Activated naive CD4-positive, alpha-beta T cell treated with anti-CD3 and anti-CD28 coated beads for 36 hours (primary cell): ENCODE measurements at regions of chr17 and their contacts with region 1.

Region 1: GRCh38 chr17:58082870-58083490 is at the start of gene DYNLL2:
- DNase-seq: peak; percentile 94
- H3K4me3 Mint-ChIP-seq: peak within 1 kb of the TSS; percentile 77
- H3K27ac Mint-ChIP-seq: peak within 1 kb of the TSS; percentile 80
- H3K4me1 Mint-ChIP-seq: peaks cover 36% of the 10 kb centered on the region
- H3K27me3 Mint-ChIP-seq: no peaks in the 10 kb centered on the region
- total RNA-seq, gene DYNLL2: 19.1 to 19.4 TPM

Region 2: GRCh38 chr17:57084802-57085447 is 998.1 kb before region 1 on chr17 and contains the start of gene AKAP1:
- CTCF ChIA-PET with region 1: no interaction called
- intact Hi-C with region 1: loop called (anchors 2 kb)
- DNase-seq: peak; percentile 95
- H3K4me3 Mint-ChIP-seq: peak within 1 kb of the TSS; percentile 83
- H3K27ac Mint-ChIP-seq: peak within 1 kb of the TSS; percentile 81
- H3K4me1 Mint-ChIP-seq: peaks cover 43% of the 10 kb centered on the region
- H3K27me3 Mint-ChIP-seq: no peaks in the 10 kb centered on the region
- total RNA-seq, gene AKAP1: 17.6 to 23.1 TPM

Region 3: DNA sequence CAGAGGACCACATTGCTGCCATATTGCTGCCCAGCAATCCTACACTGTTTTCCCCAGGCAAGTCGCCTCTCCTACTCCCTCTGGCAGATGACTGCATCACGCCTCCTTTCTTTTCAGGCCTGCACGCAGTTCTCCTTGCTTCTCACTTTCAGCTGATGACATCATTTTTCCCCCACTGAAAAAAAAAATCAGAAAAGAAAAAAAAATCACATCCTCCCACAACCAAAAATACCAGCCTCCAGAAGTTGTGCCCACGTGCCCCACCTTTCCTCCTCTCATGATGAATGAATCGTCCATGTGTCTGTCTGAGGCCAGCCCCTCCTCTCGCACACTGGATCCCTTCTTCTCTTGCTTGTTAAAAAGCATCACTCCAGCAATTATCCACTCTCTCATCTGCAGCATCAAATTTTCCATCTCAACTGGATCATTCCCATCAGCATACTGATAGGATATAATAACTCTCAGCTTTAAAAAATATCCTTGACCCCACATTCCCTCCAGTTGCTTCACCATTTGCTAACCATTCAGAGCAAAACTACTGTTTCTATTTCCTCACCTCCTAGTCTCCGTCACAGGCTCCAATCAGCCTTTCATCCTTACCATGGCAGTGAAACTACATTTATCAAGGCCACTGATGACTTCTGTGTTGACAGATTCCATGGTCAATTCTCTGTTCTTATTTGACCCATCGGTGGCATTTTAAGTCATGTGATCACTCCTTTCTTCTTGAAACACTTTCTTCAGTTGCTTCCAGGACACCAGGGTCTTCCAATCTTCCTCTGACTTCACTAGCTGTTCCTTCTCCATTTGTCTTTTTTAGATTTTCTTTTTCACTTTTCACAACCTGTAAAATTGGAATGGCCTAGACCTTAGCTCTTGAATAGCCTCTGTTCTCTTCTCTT is 29.8 kb before region 1 on chr17:
- CTCF ChIA-PET with region 1: no interaction called
- intact Hi-C with region 1: loop called (anchors 1 kb)
- DNase-seq: peak; percentile 49
- H3K4me3 Mint-ChIP-seq: no peak overlapping the region
- H3K27ac Mint-ChIP-seq: peak overlapping the region; percentile 20
- H3K4me1 Mint-ChIP-seq: peaks cover 17% of the 10 kb centered on the region
- H3K27me3 Mint-ChIP-seq: no peaks in the 10 kb centered on the region

Region 4: DNA sequence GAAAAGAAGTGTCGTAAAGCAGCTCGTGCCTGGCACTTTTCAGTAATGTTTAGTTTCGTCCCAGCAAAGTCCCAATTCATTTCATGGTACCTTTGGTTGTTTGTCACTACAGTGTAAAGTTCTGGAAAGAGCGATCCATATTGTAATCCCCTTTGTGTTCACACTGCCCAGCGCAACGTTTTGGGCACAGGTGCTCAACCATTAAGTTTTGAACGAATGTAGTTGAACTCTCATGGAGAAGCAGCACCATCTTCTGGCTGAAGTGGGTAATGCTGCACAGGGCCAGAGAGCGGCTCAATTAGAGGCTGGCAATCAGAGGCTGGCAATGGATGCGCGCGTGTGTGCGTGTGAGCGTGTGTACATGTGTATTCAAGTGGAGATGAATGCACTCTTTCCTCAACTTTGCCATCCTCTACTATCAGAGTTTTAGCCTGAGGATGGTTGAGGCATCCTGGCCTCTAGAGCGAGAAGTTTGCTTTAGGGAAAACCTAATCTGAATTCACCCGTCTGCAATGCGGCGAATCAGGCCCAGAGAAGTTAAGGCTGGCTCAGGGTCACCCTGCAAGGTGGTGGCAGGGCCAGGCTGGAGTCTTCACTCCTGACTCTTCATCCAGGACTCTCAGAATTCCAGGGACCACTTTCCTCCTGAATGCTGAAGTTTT is 30.1 kb after region 1 on chr17:
- CTCF ChIA-PET with region 1: interaction called, 3 read pairs
- intact Hi-C with region 1: loop called (anchors 1 kb)
- DNase-seq: peak; percentile 94
- H3K4me3 Mint-ChIP-seq: no peak overlapping the region
- H3K27ac Mint-ChIP-seq: no peak overlapping the region
- H3K4me1 Mint-ChIP-seq: no peaks in the 10 kb centered on the region
- H3K27me3 Mint-ChIP-seq: no peaks in the 10 kb centered on the region

Region 5: DNA sequence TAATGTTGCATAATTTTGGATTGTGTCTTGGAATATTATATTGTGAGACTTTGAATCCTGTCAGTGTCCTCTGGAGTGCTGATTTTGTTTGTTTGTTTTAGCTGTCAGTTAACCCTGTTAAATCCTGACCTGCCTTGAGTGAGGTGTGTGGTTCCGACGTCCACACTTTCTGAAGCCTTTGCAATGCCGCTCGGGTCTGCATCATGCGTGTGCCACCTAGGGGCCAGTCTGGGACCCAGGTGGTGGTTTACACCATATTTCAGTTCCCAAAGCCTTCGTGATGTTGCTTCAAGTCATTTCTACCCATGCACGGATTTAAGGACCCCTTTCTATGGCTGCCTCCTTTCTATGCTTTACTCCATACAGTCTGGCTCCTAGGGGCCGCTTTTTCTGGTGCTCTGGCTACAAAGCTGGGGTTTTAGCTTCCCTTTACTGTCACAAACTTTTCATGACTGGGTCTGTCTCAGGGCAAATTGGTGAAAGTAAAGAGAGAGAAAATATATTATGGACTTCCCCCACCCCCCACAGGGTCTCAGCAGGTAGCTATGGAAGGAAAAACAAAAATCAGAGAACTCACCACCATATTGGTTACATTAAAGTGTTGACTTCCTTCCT is 53.8 kb after region 1 on chr17:
- CTCF ChIA-PET with region 1: no interaction called
- intact Hi-C with region 1: no loop called
- DNase-seq: no peak
- H3K4me3 Mint-ChIP-seq: no peak overlapping the region
- H3K27ac Mint-ChIP-seq: no peak overlapping the region
- H3K4me1 Mint-ChIP-seq: no peaks in the 10 kb centered on the region
- H3K27me3 Mint-ChIP-seq: no peaks in the 10 kb centered on the region

Region 6: DNA sequence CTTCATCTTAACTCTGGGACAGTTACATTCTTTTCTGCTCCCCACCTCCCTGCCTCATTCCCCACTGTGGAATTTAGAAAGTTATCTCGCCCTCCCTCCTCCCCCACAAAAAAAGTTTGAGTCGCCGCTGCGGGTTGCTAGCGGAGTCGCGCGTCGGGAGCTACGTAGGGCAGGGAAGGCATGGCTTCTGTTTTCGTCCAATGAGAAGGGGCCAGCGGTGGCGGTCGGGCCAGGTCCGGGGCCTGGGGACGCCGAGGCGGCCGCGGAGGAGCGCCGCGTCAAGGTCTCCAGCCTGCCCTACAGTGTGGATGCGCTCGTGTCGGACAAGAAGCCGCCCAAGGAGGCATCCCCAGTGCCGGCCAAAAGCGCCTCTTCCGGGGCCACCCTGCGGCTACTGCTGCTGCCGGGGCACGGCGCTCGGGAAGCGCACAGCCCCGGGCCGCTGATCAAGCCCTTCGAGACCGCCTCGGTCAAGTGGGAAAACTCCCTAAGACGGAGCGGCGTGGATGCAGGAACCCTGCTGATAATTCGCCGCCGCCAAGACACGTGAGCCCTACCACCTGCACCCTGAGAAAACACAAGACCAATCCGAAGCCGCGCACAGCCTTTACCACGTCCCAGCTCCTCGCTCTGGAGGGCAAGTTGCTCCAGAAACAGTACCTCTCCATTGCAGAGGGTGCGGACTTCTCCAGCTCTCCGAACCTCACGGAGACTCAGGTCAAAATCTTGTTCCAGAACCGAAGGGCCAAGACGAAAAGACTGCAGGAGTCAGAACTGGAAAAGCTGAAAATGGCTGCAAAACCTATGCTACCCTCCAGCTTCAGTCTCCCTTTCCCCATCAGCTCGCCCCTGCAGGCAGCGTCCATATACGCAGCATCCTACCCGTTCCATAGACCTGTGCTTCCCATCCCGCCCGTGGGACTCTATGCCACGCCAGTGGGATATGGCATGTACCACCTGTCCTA is 74.1 kb after region 1 on chr17:
- CTCF ChIA-PET with region 1: no interaction called
- intact Hi-C with region 1: loop called (anchors 5 kb)
- DNase-seq: peak; percentile 71
- H3K4me3 Mint-ChIP-seq: peak overlapping the region; percentile 76
- H3K27ac Mint-ChIP-seq: peak overlapping the region; percentile 66
- H3K4me1 Mint-ChIP-seq: peaks cover 41% of the 10 kb centered on the region
- H3K27me3 Mint-ChIP-seq: no peaks in the 10 kb centered on the region

Region 7: GRCh38 chr17:58219001-58219788 is 136.2 kb after region 1 on chr17 and contains the start of gene MKS1:
- CTCF ChIA-PET with region 1: no interaction called
- intact Hi-C with region 1: loop called (anchors 2 kb)
- DNase-seq: peak; percentile 97
- H3K4me3 Mint-ChIP-seq: peak within 1 kb of the TSS; percentile 82
- H3K27ac Mint-ChIP-seq: peak within 1 kb of the TSS; percentile 92
- H3K4me1 Mint-ChIP-seq: peaks cover 25% of the 10 kb centered on the region
- H3K27me3 Mint-ChIP-seq: no peaks in the 10 kb centered on the region
- total RNA-seq, gene MKS1: 27.1 to 29.2 TPM

Region 8: DNA sequence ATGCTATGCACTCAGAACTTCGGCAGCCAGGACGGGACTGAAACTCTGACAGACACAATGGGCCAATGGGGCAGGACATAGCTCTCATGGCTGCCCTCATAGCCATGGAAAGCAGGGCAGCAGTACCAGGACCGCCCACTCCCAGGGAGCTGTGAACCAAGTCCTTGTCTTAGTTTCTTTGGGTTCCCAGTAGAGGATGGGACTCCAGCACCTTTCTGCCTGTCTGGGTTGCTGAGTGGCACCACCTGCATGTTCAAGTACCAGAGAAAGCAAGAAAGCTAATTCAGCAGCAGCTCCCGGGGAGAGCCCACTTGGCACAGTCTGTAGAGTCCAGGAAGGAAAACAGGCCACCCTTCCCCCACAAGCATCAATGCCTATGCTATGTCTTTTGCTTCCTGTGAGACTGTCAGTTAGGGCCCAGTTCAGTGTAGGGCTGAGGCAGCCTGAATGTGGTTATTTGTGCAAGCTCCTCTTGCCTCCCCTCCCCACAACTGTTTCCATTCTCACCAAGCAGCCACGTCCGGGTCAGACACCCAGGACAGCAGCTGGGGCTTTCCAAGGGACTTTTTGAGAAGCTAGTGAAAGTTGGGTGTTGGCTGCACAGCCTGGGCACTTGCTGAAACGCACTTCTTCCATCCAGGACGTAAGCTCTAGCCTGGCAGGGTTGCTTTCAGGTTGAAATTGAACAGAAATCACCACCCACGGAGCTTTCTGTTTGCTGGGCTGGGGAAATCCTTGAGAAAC is 261.2 kb after region 1 on chr17:
- CTCF ChIA-PET with region 1: no interaction called
- intact Hi-C with region 1: loop called (anchors 5 kb)
- DNase-seq: peak; percentile 98
- H3K4me3 Mint-ChIP-seq: peak overlapping the region; percentile 92
- H3K27ac Mint-ChIP-seq: peak overlapping the region; percentile 99
- H3K4me1 Mint-ChIP-seq: peaks cover 60% of the 10 kb centered on the region
- H3K27me3 Mint-ChIP-seq: no peaks in the 10 kb centered on the region